ENCODE measurements at regions of chr3 and their contacts with region 1.

Region 1: DNA sequence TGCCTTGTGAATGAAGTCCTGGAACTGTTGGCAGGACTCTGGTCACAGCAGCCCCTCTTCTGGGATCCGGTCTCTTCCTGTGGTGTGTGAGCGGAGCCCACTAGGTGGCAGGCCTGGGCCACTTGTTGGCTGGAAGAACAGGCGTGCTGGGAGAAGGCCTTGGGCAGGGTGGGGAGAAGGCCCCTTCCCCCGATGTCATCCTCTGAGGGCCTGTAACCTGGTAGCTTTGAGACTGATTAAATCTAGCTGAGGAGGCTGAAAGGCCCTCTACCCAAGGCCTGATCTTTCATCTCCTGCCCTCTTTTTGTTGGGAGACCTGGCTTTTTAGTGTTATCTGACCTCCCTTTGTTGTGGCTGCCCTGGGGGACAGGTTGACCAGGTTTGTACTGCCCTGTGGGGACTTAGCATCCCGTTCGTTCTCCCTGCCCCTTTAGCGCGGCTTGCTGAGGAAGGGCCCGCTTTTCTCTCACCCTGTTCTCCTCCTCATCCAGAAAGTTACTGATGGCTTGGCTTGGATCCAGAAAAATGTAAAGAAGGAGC is 48.3 kb downstream of the CHCHD6 start:
- DNase-seq: no peak

Region 2: DNA sequence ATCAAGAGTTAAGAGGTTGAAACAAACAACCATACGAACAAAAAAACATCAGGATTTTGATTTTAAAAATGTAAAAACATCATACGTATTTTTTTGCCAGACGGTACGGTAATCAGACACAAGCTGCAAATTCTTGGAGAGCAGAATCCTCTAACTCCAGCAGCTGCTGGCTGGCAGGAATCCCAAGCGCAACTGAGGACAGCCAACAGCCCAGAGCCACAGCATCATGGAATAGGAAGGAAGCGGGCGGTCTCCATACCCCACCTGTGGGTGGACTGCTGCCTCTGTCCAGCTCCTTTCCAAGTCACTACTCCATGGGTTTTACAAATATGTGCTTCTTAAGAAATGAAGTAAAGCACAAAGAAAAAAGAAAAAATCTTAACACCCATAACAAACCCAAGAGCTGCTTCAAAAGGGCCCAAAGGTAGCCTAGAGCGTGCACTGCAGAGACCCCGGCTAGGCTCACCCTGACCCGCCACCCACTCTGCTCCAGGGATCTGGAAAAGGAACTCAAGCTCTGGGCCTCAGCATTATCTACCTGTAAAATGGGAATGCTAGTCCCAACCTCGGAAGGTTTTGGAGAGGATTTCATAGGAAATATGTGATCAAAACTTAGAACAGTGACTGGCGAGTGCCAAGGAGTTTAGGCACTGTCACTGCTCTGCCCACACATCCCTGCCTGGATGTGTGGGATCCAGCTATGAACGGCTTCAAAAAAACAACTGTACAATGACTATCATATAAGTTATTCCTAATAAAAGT is 310.1 kb before region 1 on chr3:
- intact Hi-C with region 1: no loop called
- DNase-seq: peak; percentile 74

Region 3: DNA sequence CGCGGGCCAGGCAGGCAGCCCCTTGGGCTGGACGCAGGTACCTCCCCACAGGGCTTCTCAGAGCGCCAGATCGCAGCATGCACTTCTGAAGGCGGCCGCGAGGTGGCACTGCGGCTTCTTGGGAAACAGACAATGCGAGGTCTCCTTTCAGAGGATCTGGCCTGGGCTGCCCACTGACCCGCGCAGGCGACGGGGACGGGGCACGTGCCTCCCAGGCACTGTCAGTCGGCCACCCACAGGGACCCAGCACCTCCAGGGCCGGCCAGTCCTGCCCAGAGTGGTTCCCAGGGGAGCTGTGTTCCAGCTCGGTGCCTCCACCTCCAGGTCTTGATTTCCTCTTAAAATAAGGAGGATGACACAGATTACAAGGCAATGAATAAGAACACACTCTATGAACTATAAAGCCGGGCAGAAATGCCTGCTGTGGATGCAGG is 73.0 kb before region 1 on chr3:
- intact Hi-C with region 1: loop called (anchors 2 kb)
- DNase-seq: peak; percentile 90

Region 4: GRCh38 chr3:126782554-126782953 is 30.2 kb after region 1 on chr3:
- intact Hi-C with region 1: no loop called
- DNase-seq: no peak

Region 5: GRCh38 chr3:126995926-126996512 is 243.6 kb after region 1 on chr3:
- intact Hi-C with region 1: loop called (anchors 5 kb)
- DNase-seq: no peak

Region 6: DNA sequence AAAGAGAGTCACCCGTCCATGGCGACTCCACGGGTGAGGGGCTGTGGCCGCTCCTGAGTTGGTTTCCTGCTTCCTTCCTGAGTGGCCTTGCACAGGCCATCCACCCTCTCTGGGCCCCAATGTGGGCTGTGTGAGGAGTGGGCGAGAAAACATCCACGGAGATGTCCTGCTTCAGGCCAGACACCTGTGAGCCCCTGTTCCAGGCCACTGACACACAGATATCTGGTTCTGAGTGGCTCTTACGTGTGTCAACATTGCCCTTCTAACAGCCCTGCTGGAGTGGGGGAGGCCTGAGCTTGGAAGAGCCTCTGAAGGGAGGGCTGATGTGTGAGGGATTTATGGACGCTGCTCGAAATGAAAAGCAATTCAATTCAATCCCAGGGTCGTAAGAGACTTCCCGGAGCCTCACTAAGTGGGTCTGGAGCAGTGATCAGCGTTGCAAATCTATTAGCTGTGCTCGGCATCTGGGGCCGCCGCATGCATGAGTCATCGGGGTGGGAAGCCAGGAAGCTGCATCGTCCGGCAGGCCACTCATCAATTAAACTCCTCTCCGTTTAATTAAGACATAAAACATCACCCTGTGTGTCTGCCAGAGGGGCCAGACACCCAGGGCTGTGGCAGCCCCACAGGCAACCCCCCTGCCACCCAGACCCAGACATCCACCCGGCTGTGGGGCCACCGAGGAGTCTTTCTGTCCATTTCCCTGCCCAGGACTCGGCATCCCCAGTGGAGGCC is 420.6 kb after region 1 on chr3:
- intact Hi-C with region 1: loop called (anchors 5 kb)
- DNase-seq: peak; percentile 59

Region 7: DNA sequence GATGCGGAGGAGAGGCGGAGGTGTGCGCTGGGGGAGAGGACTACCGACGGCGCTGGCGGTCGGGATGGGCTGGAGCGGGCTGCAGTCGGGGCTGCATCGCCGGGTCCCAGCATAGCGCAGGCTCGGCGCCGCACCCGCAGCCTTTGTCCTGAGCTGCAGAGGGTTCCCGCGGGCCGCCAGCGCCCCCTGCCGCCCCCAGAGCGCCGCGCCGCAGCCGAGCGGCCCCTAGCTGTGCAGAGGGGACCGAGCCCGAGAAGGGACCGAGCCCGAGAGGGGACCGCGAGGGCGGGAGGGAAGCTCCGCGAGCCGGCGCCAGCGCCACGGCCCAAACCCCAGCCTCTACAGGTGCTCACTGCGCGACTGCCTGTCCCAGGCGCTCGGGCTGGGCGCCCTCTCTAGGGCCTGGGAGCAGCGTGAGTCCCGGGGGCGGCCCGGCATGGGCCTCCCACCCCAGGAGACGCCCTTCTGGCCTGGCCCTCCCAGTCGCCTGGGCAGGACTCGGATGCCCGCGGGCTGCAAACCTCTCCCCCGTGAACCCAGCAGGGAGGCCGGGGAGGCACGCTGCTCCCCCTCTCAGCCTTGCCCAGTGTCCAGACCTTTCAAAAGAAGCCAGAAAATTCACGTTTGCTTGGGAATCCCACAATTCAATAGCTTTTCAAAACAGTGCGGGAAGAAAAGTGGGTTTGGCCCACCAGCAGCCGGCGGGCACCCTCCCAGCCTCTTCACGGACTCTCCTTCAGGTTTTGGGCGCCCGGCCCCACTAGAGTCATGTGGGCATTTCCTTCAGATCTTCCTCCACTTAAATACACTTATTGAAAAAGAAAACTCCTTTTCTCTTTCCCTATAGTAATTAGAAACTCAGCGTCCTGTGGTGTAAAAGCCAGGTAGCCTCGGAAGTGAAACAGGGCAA is 703.4 kb after region 1 on chr3:
- intact Hi-C with region 1: loop called (anchors 2 kb)
- DNase-seq: peak; percentile 81

Region 8: GRCh38 chr3:127544192-127544802 is 791.9 kb after region 1 on chr3:
- intact Hi-C with region 1: loop called (anchors 5 kb)
- DNase-seq: peak; percentile 82

Measured in cardiac septum (tissue), 1 donor.